ENCODE measurements at regions of chr20 and their contacts with region 1.

Region 1: GRCh38 chr20:50115591-50116372 is 2.8 kb upstream of the UBE2V1 start:
- DNase-seq: peak; percentile 81 to 89
- H3K4me3 ChIP-seq: peak overlapping the region; percentile 69 to 84 (median 78)
- H3K27ac ChIP-seq: no peak overlapping the region
- H3K4me1 ChIP-seq: peaks cover 2 to 16% (median 7%) of the 10 kb centered on the region in 4 experiments; a peak in 6 of 7 replicates
- H3K27me3 ChIP-seq: no peaks in the 10 kb centered on the region
- CTCF ChIP-seq: no peak
- EP300 ChIP-seq: no peak
- POLR2A ChIP-seq: peak in 1 of 2 experiments; percentile 65; a peak in 2 of 3 replicates
- RAD21 ChIP-seq: no peak

Region 2: DNA sequence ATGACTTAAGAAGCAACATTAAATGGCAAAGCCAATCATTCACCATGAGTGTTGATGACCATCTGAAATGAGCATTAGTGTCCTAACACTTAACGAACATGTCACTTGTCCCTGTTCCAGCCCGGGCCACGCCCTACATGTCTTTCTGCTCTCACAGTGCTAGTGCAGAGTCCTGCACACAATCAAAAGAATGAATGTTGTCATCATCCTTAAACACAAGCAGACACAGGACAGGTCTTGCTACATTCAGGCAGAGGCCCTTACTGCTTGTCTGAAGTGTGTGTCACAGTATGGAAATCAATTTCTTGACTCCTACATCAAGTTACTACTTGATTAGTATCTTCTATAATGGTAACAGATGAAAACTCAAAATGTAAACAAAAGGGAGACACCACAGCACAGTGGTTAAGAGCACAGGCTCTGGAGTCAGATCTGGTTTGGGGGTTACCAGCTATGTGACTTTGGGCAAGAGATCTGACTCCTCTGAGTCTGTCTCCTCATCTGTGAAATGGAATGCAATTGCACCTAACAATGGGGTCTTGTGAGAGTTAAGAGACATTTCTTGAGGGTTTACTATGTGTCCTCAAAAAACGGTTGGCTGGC is 20.2 kb before region 1 on chr20:
- CTCF ChIA-PET with region 1: interaction called, 5 read pairs
- POLR2A ChIA-PET with region 1: interaction called, 87 read pairs
- DNase-seq: no peak
- H3K4me3 ChIP-seq: no peak overlapping the region
- H3K27ac ChIP-seq: no peak overlapping the region
- H3K4me1 ChIP-seq: peaks cover 0 to 8% (median 3%) of the 10 kb centered on the region in 4 experiments; a peak in 5 of 7 replicates
- H3K27me3 ChIP-seq: no peaks in the 10 kb centered on the region
- CTCF ChIP-seq: no peak
- EP300 ChIP-seq: no peak
- POLR2A ChIP-seq: no peak
- RAD21 ChIP-seq: no peak

Region 3: DNA sequence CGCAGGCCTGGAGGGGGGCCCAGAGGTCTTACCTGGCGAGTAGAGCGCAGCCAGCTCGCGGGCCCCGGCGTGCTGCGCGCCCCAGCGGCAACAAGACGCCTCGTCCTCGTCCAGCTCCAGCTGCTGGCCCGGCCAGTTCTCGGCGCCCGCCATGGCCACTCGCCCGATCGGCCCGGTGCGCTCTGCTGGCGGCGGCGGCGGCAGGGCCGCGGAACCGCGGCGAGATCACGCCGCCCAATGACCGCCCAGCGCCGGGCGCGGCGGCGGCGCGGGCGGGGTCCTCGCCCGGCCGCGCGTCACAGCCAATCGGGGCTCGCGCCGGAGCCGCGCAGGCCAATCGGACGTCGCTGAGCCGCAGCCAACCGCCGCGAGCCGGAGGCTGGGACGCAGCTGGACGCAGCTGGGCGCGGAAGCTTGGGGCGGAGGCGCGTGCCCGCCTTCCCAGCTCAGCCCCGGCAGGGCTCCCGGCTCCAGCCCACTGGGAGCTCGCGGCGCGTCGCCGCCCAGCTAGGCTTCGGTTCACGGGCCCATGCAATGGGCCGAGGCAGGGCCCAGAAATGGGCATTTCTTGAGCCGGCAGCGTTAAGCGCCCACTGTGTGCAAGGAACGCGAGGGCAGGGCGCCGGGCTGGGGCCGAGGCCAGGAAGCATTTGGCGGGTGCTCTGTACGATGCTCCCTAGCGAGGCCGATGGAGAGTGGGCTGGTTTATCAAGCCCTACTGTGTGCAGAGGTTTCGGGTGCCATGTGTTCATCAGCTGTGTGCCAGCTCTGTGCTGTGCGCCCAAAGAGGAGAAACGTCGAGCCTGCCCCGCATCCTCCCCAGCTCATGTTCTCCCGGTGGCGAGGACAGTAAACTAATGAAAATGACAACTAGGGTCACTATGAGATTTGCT is 37.9 kb after region 1 on chr20 and contains the start of gene PEDS1:
- CTCF ChIA-PET with region 1: interaction called, 141 read pairs
- POLR2A ChIA-PET with region 1: interaction called, 27 read pairs
- DNase-seq: peak in 1 of 2 experiments; percentile 87
- H3K4me3 ChIP-seq: peak within 1 kb of the TSS; percentile 61 to 98 (median 86)
- H3K27ac ChIP-seq: peak within 1 kb of the TSS; percentile 26; the same call in 1 of the 2 replicates
- H3K4me1 ChIP-seq: peaks cover 9 to 27% (median 16%) of the 10 kb centered on the region in 4 experiments
- H3K27me3 ChIP-seq: peaks cover 0 to 3% (median under 1%) of the 10 kb centered on the region in 4 experiments; a peak in 2 of 7 replicates
- CTCF ChIP-seq: no peak
- EP300 ChIP-seq: no peak
- POLR2A ChIP-seq: peak; percentile 70 to 75
- RAD21 ChIP-seq: no peak
- total RNA-seq, gene PEDS1: 28.9 and 33.3 TPM in 2 replicates

Region 4: DNA sequence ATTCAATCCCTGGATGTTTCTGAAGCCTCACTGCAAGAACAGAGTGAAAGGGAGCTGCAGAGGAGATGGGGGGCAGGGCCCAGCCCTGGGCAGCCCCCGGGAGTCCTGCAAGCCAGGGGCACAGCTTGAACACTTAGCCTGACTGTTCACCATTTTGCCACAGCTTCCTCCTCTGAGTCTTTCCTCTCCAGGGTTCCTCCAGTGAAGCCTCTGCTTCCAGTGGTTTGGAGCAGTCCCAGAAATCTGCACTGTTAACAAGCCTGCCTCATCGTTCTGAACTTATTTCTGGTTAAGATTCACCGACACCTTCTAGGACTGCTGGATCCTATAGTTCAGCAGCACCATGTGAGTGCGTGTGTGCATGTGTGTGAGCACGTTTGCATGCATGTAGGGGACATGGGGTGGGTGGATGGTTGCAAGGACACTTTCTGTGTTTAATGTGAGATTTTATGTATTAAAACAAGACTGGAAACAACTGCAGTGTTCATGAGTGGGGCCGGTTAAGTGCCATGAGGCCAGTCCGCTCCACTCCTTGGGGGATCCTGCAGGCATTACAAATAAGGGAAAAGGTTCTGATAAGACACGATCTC is 99.4 kb after region 1 on chr20:
- CTCF ChIA-PET with region 1: no interaction called
- POLR2A ChIA-PET with region 1: no interaction called
- DNase-seq: no peak
- H3K4me3 ChIP-seq: no peak overlapping the region
- H3K27ac ChIP-seq: no peak overlapping the region
- H3K4me1 ChIP-seq: peaks cover 0 to 7% (median 0%) of the 10 kb centered on the region in 4 experiments; a peak in 1 of 7 replicates
- H3K27me3 ChIP-seq: no peaks in the 10 kb centered on the region; a peak in 1 of 7 replicates
- CTCF ChIP-seq: no peak
- EP300 ChIP-seq: no peak
- POLR2A ChIP-seq: no peak
- RAD21 ChIP-seq: no peak

Measured in H1 (cell line).